CD8-positive, alpha-beta T cell (primary cell): ENCODE measurements at regions of chr14 and their contacts with region 1.

Region 1: GRCh38 chr14:73949744-73950734 is at the starts of genes COQ6 and FAM161B:
- DNase-seq: peak; percentile 82 to 98 (median 90)
- ATAC-seq: peak; percentile 92
- H3K4me3 ChIP-seq: peak within 1 kb of the TSS; percentile 74 to 83
- H3K4me3 Mint-ChIP-seq: peak within 1 kb of the TSS; percentile 98
- H3K27ac ChIP-seq: peak within 1 kb of the TSS; percentile 93 to 95
- H3K27ac Mint-ChIP-seq: peak within 1 kb of the TSS; percentile 96
- H3K4me1 ChIP-seq: peaks cover 10% of the 10 kb centered on the region
- H3K4me1 Mint-ChIP-seq: peaks cover 26% of the 10 kb centered on the region
- H3K27me3 ChIP-seq: no peaks in the 10 kb centered on the region
- H3K27me3 Mint-ChIP-seq: no peaks in the 10 kb centered on the region
- CTCF ChIP-seq: no peak
- total RNA-seq, gene COQ6: 33.9 to 44.4 TPM
- total RNA-seq, gene FAM161B: 1.9 to 3.2 TPM

Region 2: DNA sequence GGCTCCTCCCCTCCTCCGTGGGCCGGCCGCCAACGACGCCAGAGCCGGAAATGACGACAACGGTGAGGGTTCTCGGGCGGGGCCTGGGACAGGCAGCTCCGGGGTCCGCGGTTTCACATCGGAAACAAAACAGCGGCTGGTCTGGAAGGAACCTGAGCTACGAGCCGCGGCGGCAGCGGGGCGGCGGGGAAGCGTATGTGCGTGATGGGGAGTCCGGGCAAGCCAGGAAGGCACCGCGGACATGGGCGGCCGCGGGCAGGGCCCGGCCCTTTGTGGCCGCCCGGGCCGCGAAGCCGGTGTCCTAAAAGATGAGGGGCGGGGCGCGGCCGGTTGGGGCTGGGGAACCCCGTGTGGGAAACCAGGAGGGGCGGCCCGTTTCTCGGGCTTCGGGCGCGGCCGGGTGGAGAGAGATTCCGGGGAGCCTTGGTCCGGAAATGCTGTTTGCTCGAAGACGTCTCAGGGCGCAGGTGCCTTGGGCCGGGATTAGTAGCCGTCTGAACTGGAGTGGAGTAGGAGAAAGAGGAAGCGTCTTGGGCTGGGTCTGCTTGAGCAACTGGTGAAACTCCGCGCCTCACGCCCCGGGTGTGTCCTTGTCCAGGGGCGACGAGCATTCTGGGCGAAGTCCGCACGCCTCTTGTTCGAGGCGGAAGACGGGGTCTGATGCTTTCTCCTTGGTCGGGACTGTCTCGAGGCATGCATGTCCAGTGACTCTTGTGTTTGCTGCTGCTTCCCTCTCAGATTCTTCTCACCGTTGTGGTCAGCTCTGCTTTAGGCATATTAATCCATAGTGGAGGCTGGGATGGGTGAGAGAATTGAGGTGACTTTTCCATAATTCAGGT is 813.4 kb before region 1 on chr14 and contains the start of gene PSEN1:
- CTCF ChIA-PET with region 1: no interaction called
- POLR2A ChIA-PET with region 1: no interaction called
- intact Hi-C with region 1: loop called in 1 of 2 experiments (anchors 2 kb)
- DNase-seq: peak; percentile 98 to 100 (median 99)
- ATAC-seq: peak; percentile 96
- H3K4me3 ChIP-seq: peak within 1 kb of the TSS; percentile 84 to 92
- H3K4me3 Mint-ChIP-seq: peak within 1 kb of the TSS; percentile 97
- H3K27ac ChIP-seq: peak within 1 kb of the TSS; percentile 91 to 93
- H3K27ac Mint-ChIP-seq: peak within 1 kb of the TSS; percentile 99
- H3K4me1 ChIP-seq: peaks cover 17% of the 10 kb centered on the region
- H3K4me1 Mint-ChIP-seq: peaks cover 31% of the 10 kb centered on the region
- H3K27me3 ChIP-seq: no peaks in the 10 kb centered on the region
- H3K27me3 Mint-ChIP-seq: no peaks in the 10 kb centered on the region
- CTCF ChIP-seq: no peak
- total RNA-seq, gene PSEN1: 24.2 to 24.4 TPM

Region 3: GRCh38 chr14:73713803-73714655 is 236.0 kb before region 1 on chr14 and contains the start of gene PNMA1:
- CTCF ChIA-PET with region 1: no interaction called
- POLR2A ChIA-PET with region 1: no interaction called
- intact Hi-C with region 1: loop called in 1 of 2 experiments (anchors 5 kb)
- DNase-seq: peak; percentile 67 to 94 (median 87)
- ATAC-seq: peak; percentile 72
- H3K4me3 ChIP-seq: peak within 1 kb of the TSS; percentile 71 to 92
- H3K4me3 Mint-ChIP-seq: peak within 1 kb of the TSS; percentile 92
- H3K27ac ChIP-seq: peak within 1 kb of the TSS; percentile 76 to 77
- H3K27ac Mint-ChIP-seq: peak within 1 kb of the TSS; percentile 96
- H3K4me1 ChIP-seq: peaks cover 10% of the 10 kb centered on the region
- H3K4me1 Mint-ChIP-seq: peaks cover 34% of the 10 kb centered on the region
- H3K27me3 ChIP-seq: no peaks in the 10 kb centered on the region
- H3K27me3 Mint-ChIP-seq: no peaks in the 10 kb centered on the region
- CTCF ChIP-seq: no peak
- total RNA-seq, gene PNMA1: 39.4 to 39.8 TPM

Region 4: DNA sequence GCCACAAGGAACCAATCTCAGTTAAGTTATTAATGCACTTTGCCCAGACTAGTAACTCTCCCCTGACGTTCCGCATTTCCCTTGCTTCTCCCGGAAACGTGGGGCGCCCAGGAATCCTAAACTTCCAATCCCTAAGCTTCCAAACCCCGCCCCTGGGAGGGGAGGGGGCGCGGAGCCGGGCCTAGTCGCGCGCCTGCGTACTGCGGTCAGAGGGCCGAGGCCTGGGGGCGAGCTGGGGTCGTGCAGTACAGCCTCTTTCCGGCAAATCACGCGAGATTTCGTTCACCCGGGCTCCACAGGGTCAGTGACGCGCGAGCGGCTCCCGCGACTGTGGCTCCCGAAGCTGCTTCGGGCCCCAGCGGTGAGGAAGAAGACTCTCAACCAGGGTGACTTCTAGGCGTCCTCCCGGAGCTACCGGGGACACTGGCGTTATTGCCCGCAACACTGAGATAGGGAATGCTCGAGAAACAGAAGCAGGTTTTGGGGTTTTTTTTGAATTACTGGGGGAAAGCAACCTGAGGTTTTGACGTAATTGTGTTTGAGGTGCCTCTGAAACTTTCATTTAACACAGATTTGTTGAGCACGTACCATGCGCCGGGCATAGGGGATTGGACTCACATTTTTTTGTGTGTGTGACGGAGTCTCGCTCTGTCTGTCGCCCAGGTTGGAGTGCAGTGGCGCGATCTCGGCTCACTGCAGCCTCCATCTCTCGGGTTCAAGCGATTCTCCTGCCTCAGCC is 98.2 kb before region 1 on chr14 and contains the start of gene PTGR2:
- CTCF ChIA-PET with region 1: no interaction called
- POLR2A ChIA-PET with region 1: no interaction called
- intact Hi-C with region 1: loop called (anchors 1 kb)
- DNase-seq: peak; percentile 77 to 97 (median 89)
- ATAC-seq: peak; percentile 93
- H3K4me3 ChIP-seq: peak within 1 kb of the TSS; percentile 47 to 63
- H3K4me3 Mint-ChIP-seq: peak within 1 kb of the TSS; percentile 90
- H3K27ac ChIP-seq: peak within 1 kb of the TSS; percentile 70 to 81
- H3K27ac Mint-ChIP-seq: peak within 1 kb of the TSS; percentile 98
- H3K4me1 ChIP-seq: peaks cover 6% of the 10 kb centered on the region
- H3K4me1 Mint-ChIP-seq: peaks cover 21% of the 10 kb centered on the region
- H3K27me3 ChIP-seq: no peaks in the 10 kb centered on the region
- H3K27me3 Mint-ChIP-seq: no peaks in the 10 kb centered on the region
- CTCF ChIP-seq: no peak
- total RNA-seq, gene PTGR2: 1.2 to 1.4 TPM

Region 5: GRCh38 chr14:74018586-74019407 is 68.8 kb after region 1 on chr14 and contains the starts of genes BBOF1 and ENTPD5:
- CTCF ChIA-PET with region 1: no interaction called
- POLR2A ChIA-PET with region 1: interaction called, 4 read pairs
- intact Hi-C with region 1: loop called (anchors 1 kb)
- DNase-seq: peak; percentile 69 to 95 (median 86)
- ATAC-seq: peak; percentile 93
- H3K4me3 ChIP-seq: peak within 1 kb of the TSS; percentile 82 to 93
- H3K4me3 Mint-ChIP-seq: peak within 1 kb of the TSS; percentile 91
- H3K27ac ChIP-seq: peak within 1 kb of the TSS; percentile 86 to 94
- H3K27ac Mint-ChIP-seq: peak within 1 kb of the TSS; percentile 97
- H3K4me1 ChIP-seq: peaks cover 12% of the 10 kb centered on the region
- H3K4me1 Mint-ChIP-seq: peaks cover 16% of the 10 kb centered on the region
- H3K27me3 ChIP-seq: no peaks in the 10 kb centered on the region
- H3K27me3 Mint-ChIP-seq: no peaks in the 10 kb centered on the region
- CTCF ChIP-seq: no peak
- total RNA-seq, gene BBOF1: 2.4 to 2.9 TPM
- total RNA-seq, gene ENTPD5: 8.0 to 9.0 TPM

Region 6: DNA sequence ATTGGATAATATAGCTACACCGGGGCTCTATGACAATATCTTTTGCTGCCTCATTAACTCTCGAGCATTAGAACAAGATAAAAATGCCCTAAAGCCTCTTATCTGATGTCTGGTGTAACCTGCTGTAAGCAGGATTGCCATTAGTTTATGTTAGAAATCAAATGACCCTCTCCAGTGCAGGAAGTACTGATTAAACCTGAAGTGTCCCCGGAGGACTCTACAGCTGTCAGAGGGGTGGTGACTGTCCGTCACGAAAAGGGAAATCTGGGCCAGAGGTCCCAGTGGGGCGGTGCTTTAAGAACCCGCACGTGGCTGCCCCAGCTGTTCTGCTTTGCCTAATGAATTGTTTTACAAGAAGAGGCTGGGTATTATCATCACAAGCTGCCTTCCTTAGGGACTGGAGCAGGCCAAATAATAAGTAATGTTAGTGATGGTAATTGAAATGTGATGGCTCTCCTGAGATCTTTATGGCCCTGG is 190.4 kb after region 1 on chr14:
- CTCF ChIA-PET with region 1: no interaction called
- POLR2A ChIA-PET with region 1: no interaction called
- intact Hi-C with region 1: no loop called
- DNase-seq: no peak
- ATAC-seq: no peak
- H3K4me3 ChIP-seq: no peak overlapping the region
- H3K4me3 Mint-ChIP-seq: no peak overlapping the region
- H3K27ac ChIP-seq: no peak overlapping the region
- H3K27ac Mint-ChIP-seq: no peak overlapping the region
- H3K4me1 ChIP-seq: no peaks in the 10 kb centered on the region
- H3K4me1 Mint-ChIP-seq: peaks cover 10% of the 10 kb centered on the region
- H3K27me3 ChIP-seq: no peaks in the 10 kb centered on the region
- H3K27me3 Mint-ChIP-seq: no peaks in the 10 kb centered on the region
- CTCF ChIP-seq: no peak